Activated B cell treated with CpG ODN at 0.5 μM for 24 hours (primary cell): ENCODE measurements at regions of chr10 and their contacts with region 1.

Region 1: DNA sequence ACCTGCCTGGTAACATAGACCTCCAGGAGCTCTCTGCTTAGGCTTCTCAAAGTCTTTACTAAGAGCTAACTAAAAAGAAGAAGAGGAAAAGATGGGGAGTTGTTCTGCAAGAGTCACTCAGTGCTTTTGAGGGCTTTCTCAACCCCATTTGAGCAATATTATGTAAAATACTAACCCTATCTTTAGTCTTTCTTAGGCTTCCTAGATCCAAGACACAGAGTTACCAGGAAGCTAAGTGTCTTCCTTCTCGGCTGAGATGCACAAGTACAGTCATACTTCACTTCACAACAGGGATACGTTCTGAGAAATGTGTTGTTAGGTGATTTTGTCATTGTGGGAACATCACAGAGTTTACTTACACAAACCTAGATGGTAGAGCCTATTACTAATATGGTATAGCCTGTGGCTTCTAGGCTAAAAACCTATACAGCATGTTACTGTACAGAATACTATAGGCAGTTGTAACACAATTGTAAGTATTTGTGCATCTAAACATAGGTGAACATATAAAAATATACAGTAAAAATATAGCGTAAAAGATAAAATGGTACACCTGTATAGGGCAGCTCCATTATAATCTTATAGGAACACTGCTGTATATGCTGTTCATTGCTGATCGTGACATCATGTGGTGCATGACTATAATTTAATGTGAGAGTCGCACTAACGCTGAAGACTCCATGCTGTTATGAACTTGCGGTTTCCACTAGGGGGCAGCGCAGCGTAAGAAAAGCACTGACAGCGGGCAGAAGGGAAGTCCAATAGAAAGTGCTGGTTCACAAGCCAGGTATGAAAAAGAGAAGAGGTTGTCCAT is 16.3 kb downstream of the ANKRD22 start:
- DNase-seq: peak; percentile 66
- ATAC-seq: peak; percentile 98
- H3K4me3 Mint-ChIP-seq: no peak overlapping the region
- H3K27ac Mint-ChIP-seq: no peak overlapping the region
- H3K4me1 Mint-ChIP-seq: peaks cover 2% of the 10 kb centered on the region
- H3K27me3 Mint-ChIP-seq: peaks cover 5% of the 10 kb centered on the region
- CTCF ChIP-seq: no peak

Region 2: DNA sequence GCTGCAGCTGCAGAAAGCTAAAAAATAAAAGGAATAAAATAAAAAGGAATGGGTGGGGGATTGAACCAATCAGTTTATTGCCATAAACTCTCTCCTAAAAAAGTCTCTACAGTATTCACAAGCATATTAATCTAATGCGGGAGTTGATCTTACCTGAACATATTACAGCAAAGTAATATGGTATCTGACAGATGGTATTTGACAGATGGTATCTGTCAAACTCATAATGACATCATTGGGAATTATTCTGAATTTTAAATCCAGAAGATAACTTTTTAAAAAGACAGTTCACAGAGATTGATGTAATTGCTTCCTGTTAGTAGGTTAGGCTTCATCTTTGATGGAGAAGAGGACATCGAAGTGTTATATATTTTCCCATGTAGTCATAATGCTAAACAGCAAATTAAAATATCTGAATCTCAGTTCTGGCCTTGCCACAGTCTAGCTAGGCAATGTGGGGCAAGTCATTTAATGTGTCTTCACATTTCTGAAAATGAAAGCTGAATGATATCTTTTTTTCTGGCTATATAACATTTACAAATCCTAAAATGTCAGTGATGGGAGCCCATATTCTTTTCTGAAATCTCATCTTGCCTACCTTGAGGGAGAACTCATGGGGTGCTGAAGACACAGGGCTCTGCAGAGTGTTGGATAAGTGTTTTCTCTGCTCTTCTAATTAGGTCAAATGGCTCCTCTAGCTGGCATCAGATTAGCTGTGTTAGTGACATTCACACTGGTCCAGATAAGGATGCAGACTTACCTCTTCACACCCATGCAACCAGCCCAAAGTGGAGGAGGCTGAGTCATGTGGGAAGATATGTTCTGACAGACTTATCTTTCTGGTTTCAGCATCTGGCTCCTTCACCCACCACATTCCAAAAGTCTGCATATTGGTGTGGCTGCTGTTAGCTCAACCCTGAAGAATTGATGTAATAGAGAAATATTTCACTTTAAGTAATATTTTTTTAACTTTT is 34.9 kb before region 1 on chr10:
- CTCF ChIA-PET with region 1: no interaction called
- POLR2A ChIA-PET with region 1: no interaction called
- intact Hi-C with region 1: no loop called
- DNase-seq: no peak
- ATAC-seq: no peak
- H3K4me3 Mint-ChIP-seq: no peak overlapping the region
- H3K27ac Mint-ChIP-seq: no peak overlapping the region
- H3K4me1 Mint-ChIP-seq: no peaks in the 10 kb centered on the region
- H3K27me3 Mint-ChIP-seq: no peaks in the 10 kb centered on the region
- CTCF ChIP-seq: no peak

Region 3: DNA sequence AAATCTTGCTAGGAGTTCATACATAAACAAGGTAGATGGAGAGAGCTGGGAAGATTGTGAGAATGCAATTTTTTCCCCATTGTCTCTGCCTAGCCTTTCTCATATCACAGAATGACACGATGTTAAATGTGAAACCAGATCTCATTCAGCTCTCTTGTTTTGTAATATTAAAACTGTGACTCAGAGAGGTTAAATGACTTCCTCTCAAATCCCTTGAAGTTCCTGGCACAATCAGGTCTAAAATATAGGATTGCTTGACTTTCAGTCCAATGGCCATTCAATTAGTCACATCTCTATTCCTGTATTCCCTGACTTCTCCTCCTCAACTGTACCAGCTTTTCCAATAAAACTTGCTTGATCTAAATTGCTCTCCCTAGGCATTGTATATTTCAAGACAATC is 13.2 kb after region 1 on chr10:
- CTCF ChIA-PET with region 1: interaction called, 11 read pairs
- POLR2A ChIA-PET with region 1: no interaction called
- intact Hi-C with region 1: no loop called
- DNase-seq: no peak
- ATAC-seq: no peak
- H3K4me3 Mint-ChIP-seq: no peak overlapping the region
- H3K27ac Mint-ChIP-seq: no peak overlapping the region
- H3K4me1 Mint-ChIP-seq: peaks cover 3% of the 10 kb centered on the region
- H3K27me3 Mint-ChIP-seq: no peaks in the 10 kb centered on the region
- CTCF ChIP-seq: no peak

Region 4: DNA sequence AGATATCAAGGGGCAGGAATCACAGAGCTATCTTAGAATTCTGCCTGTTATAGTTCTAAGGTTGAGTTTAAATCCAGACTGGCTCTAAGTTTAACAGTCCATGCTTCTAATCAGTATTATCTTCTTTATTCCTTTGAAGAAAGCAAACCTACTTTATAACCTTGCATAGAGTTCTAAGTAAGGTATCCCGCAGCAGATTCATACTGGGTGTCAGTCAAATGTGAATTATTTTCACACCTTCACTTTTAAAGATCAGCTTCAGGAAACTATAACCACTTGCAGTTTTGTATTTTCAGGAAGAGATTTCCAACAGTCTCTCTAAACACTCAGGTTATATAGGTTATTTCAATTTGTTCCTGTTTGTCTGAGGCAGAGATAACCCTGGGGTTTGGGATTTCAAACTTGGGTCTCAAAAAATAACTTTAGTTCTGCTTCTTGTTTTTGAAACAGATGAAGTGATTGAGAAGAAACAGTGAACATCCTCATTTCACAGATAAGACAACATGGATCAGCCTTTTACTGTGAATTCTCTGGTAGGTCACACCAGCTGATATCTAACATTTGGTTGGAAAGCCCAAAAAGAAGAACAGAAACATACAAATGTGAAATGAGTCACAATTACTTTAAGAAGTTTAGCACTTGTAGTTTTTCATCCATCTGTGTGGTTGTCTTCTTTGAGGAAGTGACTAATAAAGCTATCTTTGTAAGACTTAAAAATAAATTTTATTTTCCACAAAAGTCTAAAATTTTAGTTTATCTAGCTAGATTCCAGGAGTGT is 66.1 kb after region 1 on chr10:
- CTCF ChIA-PET with region 1: interaction called, 11 read pairs
- POLR2A ChIA-PET with region 1: interaction called, 8 read pairs
- intact Hi-C with region 1: loop called (anchors 1 kb)
- DNase-seq: no peak
- ATAC-seq: peak; percentile 83
- H3K4me3 Mint-ChIP-seq: peak overlapping the region; percentile 65
- H3K27ac Mint-ChIP-seq: peak overlapping the region; percentile 98
- H3K4me1 Mint-ChIP-seq: peaks cover 65% of the 10 kb centered on the region
- H3K27me3 Mint-ChIP-seq: no peaks in the 10 kb centered on the region
- CTCF ChIP-seq: no peak

Region 5: GRCh38 chr10:88990384-88991160 is 155.3 kb after region 1 on chr10 and contains the start of gene FAS:
- CTCF ChIA-PET with region 1: interaction called, 3 read pairs
- POLR2A ChIA-PET with region 1: no interaction called
- intact Hi-C with region 1: loop called (anchors 1 kb)
- DNase-seq: peak; percentile 56
- ATAC-seq: peak; percentile 75
- H3K4me3 Mint-ChIP-seq: peak within 1 kb of the TSS; percentile 95
- H3K27ac Mint-ChIP-seq: peak within 1 kb of the TSS; percentile 88
- H3K4me1 Mint-ChIP-seq: peaks cover 53% of the 10 kb centered on the region
- H3K27me3 Mint-ChIP-seq: no peaks in the 10 kb centered on the region
- CTCF ChIP-seq: no peak
- total RNA-seq, gene FAS: 18.2 and 22.6 TPM in 2 replicates

Region 6: DNA sequence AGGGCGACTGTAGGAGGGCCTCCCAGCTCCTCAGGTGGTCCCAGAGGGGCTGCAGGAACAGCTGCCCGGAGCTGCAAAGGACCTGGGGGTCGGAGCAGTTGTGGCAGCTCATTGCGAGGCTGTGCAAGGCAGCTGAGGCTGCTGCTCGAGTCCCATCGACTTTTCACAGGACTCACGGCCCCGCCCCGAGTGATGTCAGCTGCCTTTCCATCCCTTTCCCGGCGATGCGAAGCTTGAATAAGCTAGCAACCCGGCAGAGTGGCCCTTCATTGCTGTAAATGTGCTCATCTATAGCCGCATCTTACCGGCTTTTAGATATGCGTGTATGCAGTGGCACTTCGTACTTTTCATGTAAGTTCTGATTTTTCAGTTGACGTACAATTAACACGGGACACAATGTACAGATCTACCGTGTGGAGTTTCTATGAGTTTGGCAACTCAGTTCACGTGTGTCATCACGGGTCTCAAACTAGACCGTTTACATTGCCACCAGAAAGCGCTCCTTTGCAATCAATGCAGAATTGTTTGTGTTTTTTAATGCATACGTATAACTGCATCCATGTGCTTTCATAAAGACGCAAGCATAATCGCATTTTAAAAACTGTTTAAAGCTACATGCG is 372.0 kb after region 1 on chr10 and contains the start of gene CH25H:
- CTCF ChIA-PET with region 1: interaction called, 11 read pairs
- POLR2A ChIA-PET with region 1: no interaction called
- intact Hi-C with region 1: no loop called
- DNase-seq: no peak
- ATAC-seq: peak; percentile 65
- H3K4me3 Mint-ChIP-seq: peak within 1 kb of the TSS; percentile 83
- H3K27ac Mint-ChIP-seq: no peak within 1 kb of the TSS
- H3K4me1 Mint-ChIP-seq: peaks cover 27% of the 10 kb centered on the region
- H3K27me3 Mint-ChIP-seq: peaks cover 47% of the 10 kb centered on the region
- CTCF ChIP-seq: no peak
- total RNA-seq, gene CH25H: not detected in 2 replicates